Mammary epithelial cell (primary cell): ENCODE measurements at regions of chr16 and their contacts with region 1.

Region 1: GRCh38 chr16:56789360-56789759 is 59.4 kb downstream of the NUP93 start:
- DNase-seq: peak; percentile 45
- H3K4me3 ChIP-seq: no peak overlapping the region
- H3K27ac ChIP-seq: no peak overlapping the region
- H3K4me1 ChIP-seq: no peaks in the 10 kb centered on the region
- H3K27me3 ChIP-seq: no peaks in the 10 kb centered on the region
- CTCF ChIP-seq: peak; percentile 54 to 72

Region 2: GRCh38 chr16:56513972-56514371 is 275.4 kb before region 1 on chr16:
- CTCF ChIA-PET with region 1: no interaction called
- dilution Hi-C with region 1: no loop called
- in situ Hi-C with region 1: no loop called
- intact Hi-C with region 1: loop called (anchors 1 kb)
- DNase-seq: peak; percentile 59
- H3K4me3 ChIP-seq: no peak overlapping the region
- H3K27ac ChIP-seq: no peak overlapping the region
- H3K4me1 ChIP-seq: peaks cover 33% of the 10 kb centered on the region
- H3K27me3 ChIP-seq: no peaks in the 10 kb centered on the region
- CTCF ChIP-seq: peak; percentile 79 to 80

Region 3: DNA sequence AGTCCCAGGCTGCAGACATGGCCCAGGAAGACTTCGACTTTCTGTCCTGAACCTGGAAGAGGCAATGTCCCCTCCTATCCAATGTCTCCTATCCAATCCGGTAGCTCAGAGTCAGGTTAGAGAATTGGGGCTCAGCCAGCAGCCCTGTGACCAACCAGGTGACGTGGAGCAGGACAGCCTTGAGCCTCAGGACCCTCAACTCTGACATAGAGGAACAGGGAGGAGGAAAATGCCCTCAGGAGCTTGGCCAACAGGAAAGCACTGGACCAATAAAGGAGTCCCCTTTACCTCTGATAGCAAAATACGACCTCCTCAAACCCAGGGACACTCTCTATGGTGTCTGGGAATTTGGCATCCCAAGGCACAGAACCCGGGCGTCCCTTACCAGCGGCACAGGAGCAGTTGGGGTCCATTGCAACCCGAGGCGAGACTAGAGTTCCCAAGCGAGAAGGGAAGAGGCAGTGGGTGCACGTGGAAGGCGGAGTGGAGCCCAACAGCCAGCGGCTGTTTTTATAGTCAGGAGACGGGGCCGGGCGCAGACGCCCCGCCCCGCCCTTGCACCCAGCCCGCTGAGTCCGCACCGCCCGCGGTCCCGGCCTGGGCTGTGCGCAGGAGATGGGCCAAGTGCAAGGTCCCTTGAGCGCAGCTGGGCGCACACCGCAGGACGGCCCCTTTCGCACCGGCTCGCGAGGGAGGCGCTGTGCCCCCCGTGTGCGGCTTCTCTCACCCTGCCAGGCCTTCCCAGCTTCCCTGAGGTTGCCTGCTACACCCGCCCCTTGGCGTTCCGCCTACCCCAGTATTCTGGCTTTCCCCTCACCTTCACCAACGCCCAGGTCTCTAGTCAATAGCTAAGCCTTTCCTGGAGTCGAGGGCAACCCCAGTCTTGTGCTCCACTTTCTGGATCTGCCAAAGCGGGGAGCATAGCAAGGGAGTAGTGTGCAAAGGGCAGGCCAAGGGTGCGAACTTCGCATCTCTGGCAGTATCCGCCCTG is 121.5 kb before region 1 on chr16 and contains the start of gene MT1G:
- CTCF ChIA-PET with region 1: no interaction called
- dilution Hi-C with region 1: no loop called
- in situ Hi-C with region 1: no loop called
- intact Hi-C with region 1: no loop called
- DNase-seq: no peak
- H3K4me3 ChIP-seq: no peak within 1 kb of the TSS
- H3K27ac ChIP-seq: no peak within 1 kb of the TSS
- H3K4me1 ChIP-seq: peaks cover 3% of the 10 kb centered on the region
- H3K27me3 ChIP-seq: peaks cover 2% of the 10 kb centered on the region
- CTCF ChIP-seq: no peak
- total RNA-seq, gene MT1G: 0.92 to 2.3 TPM

Region 4: GRCh38 chr16:56700195-56700594 is 89.2 kb before region 1 on chr16:
- CTCF ChIA-PET with region 1: no interaction called
- dilution Hi-C with region 1: no loop called
- in situ Hi-C with region 1: no loop called
- intact Hi-C with region 1: loop called (anchors 1 kb)
- DNase-seq: no peak
- H3K4me3 ChIP-seq: no peak overlapping the region
- H3K27ac ChIP-seq: no peak overlapping the region
- H3K4me1 ChIP-seq: peaks cover 6% of the 10 kb centered on the region
- H3K27me3 ChIP-seq: no peaks in the 10 kb centered on the region
- CTCF ChIP-seq: no peak

Region 5: DNA sequence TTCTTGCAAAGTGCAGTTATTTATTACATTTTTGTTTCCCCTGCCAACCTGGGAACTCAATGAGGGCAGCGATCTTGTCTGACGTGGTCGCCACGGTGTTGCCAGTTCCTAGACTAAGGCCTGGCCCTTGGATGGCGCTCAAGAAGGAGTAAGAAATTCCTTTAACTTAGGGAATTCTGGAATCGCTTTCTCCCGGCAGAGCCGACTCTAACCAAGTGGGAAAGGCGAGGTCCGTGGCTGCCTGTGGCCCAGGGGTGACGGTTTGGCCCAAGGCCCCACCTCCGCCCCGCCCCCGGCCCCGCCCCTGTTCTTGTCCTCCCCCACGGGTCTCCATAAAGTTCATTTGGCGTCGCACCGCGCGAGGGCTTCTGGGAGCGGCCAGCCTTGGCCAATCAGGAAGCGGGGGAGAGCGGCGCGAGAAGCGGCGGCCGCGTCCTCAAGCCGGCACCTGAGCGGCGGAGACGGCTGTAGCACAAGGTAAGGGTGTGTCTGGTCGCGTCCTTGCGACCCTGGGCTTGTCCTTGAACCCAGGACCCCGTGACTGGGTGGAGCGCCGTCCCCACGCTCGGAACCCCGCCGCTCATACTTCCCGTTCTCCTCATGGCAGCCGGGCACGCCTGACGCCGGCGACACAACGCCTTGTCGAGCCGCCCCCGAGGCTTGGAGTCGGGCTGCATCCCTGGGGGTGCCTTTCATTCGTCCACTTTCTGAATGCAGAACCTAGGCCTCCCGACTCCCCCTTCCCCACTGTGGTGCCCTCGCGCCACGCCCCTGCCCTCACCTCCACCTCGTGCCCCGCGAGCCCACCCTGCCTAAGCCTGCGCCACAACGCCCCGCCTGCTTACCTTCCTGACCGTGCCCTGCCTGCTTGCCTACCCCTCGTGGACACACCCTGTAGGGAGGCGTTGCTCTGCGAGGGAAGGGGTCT is 59.4 kb before region 1 on chr16 and contains the start of gene NUP93:
- CTCF ChIA-PET with region 1: no interaction called
- dilution Hi-C with region 1: no loop called
- in situ Hi-C with region 1: no loop called
- intact Hi-C with region 1: loop called (anchors 2 kb)
- DNase-seq: peak; percentile 90
- H3K4me3 ChIP-seq: peak within 1 kb of the TSS; percentile 67 to 88 (median 86)
- H3K27ac ChIP-seq: peak within 1 kb of the TSS; percentile 73
- H3K4me1 ChIP-seq: peaks cover 33% of the 10 kb centered on the region
- H3K27me3 ChIP-seq: no peaks in the 10 kb centered on the region
- CTCF ChIP-seq: no peak
- total RNA-seq, gene NUP93: 49.3 to 100 TPM

Region 6: DNA sequence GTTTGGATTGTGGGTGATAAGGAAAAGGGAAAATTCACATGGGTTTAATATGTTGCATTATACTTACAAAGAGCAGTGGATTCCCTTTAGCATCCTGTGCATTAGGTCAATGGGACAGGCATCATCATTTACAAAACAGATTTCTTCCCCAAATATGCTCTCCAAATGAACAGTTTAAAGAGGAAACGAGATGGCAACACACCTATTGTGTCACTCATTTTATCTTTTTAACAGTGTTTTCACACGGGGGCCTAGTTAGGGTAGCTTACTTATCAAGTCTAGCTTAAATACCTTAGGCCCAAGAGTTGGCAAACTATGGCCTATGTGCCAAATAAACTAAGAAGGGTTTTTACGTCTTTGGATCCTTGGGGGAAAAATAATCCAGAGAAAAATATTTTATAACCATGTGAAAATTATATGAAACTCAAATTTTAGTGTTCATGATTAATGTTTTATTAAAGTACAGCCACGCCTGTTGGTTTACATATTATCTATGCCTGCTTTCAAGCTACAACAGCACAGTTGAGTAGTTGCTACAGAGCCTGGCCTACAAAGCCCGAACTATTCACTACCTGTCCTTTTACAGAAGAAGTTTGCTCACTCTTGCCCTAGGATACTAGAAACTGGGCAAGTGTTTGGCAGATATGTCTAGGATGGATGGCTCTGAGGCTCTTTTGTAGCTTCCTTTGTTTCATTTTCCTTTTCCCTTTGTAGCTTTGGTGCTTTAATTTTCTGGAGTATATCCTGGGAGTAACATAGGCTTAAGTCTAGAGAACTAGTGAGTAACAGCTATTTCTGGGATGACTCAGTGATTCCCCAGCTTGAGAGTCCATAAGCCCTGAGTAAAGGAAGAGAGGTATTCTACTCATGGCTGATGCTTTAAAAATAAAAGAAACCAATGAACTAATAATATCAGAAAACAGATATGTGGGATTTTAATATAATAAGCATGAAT is 47.1 kb before region 1 on chr16:
- CTCF ChIA-PET with region 1: no interaction called
- dilution Hi-C with region 1: no loop called
- in situ Hi-C with region 1: no loop called
- intact Hi-C with region 1: no loop called
- DNase-seq: peak; percentile 79
- H3K4me3 ChIP-seq: peak overlapping the region in 1 of 3 experiments; percentile 21
- H3K27ac ChIP-seq: peak overlapping the region; percentile 80
- H3K4me1 ChIP-seq: peaks cover 27% of the 10 kb centered on the region
- H3K27me3 ChIP-seq: no peaks in the 10 kb centered on the region
- CTCF ChIP-seq: no peak

Region 7: GRCh38 chr16:56836410-56837230 is 47.3 kb after region 1 on chr16:
- CTCF ChIA-PET with region 1: no interaction called
- dilution Hi-C with region 1: no loop called
- in situ Hi-C with region 1: no loop called
- intact Hi-C with region 1: no loop called
- DNase-seq: no peak
- H3K4me3 ChIP-seq: no peak overlapping the region
- H3K27ac ChIP-seq: no peak overlapping the region
- H3K4me1 ChIP-seq: peaks cover 15% of the 10 kb centered on the region
- H3K27me3 ChIP-seq: no peaks in the 10 kb centered on the region
- CTCF ChIP-seq: no peak

Region 8: DNA sequence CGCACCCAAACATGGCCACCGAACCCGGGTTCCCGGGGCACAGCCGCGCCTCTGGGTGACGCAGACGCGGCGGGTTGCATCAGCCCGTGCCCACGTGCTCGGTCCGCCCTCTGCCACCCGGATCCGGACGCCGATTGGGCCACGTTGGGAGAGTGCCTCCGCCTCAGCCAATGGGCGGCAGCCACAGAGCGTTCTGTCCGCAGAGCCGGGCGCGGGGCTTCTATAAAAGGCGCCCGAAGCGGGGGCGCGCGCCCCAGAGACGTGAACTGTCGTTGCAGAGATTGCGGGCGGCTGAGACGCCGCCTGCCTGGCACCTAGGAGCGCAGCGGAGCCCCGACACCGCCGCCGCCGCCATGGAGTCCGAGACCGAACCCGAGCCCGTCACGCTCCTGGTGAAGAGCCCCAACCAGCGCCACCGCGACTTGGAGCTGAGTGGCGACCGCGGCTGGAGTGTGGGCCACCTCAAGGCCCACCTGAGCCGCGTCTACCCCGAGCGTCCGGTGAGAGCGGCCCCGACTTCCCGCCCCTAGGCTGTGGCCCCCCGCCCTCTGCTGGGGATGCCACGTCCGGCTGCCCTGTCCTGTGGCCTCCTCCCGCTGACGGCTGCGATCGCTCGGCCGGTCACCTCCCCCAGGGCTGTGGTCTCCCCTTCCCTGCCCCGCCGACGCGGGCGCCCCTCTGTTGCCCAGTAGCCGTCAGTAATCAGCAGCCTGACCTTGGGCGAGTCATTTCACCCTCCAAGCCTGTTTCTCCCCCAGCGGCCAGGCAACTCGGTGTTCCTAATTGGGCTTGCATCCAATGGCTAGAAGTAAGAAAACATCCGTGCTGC is 142.7 kb after region 1 on chr16 and contains the start of gene HERPUD1:
- CTCF ChIA-PET with region 1: no interaction called
- dilution Hi-C with region 1: no loop called
- in situ Hi-C with region 1: no loop called
- intact Hi-C with region 1: loop called (anchors 2 kb)
- DNase-seq: peak; percentile 97
- H3K4me3 ChIP-seq: peak within 1 kb of the TSS; percentile 81 to 90 (median 85)
- H3K27ac ChIP-seq: peak within 1 kb of the TSS; percentile 91
- H3K4me1 ChIP-seq: peaks cover 17% of the 10 kb centered on the region
- H3K27me3 ChIP-seq: no peaks in the 10 kb centered on the region
- CTCF ChIP-seq: peak in 1 of 2 donors; percentile 16
- total RNA-seq, gene HERPUD1: 166 to 239 TPM